Mucosa of descending colon (tissue), 3 donors: ENCODE measurements at regions of chr10 and their contacts with region 1.

Region 1: GRCh38 chr10:23994479-23995046 is 214.4 kb upstream of the KIAA1217 start:
- DNase-seq: peak in 2 of 3 donors; percentile 43 to 87
- ATAC-seq: peak; percentile 77
- H3K4me3 ChIP-seq: no peak overlapping the region
- H3K4me1 ChIP-seq: no peaks in the 10 kb centered on the region
- CTCF ChIP-seq: peak; percentile 49

Region 2: GRCh38 chr10:23469596-23470237 is 524.8 kb before region 1 on chr10:
- intact Hi-C with region 1: no loop called
- DNase-seq: peak in 1 of 3 donors; percentile 13
- ATAC-seq: peak; percentile 64
- H3K4me3 ChIP-seq: no peak overlapping the region
- H3K4me1 ChIP-seq: no peaks in the 10 kb centered on the region
- CTCF ChIP-seq: no peak

Region 3: GRCh38 chr10:23630880-23631279 is 363.7 kb before region 1 on chr10:
- intact Hi-C with region 1: no loop called
- DNase-seq: no peak
- ATAC-seq: no peak
- H3K4me3 ChIP-seq: no peak overlapping the region
- H3K4me1 ChIP-seq: no peaks in the 10 kb centered on the region
- CTCF ChIP-seq: no peak

Region 4: GRCh38 chr10:24197263-24197662 is 202.7 kb after region 1 on chr10:
- intact Hi-C with region 1: loop called in 1 of 2 experiments (anchors 5 kb)
- DNase-seq: no peak
- ATAC-seq: no peak
- H3K4me3 ChIP-seq: no peak overlapping the region
- H3K4me1 ChIP-seq: peaks cover 4% of the 10 kb centered on the region
- CTCF ChIP-seq: no peak

Region 5: DNA sequence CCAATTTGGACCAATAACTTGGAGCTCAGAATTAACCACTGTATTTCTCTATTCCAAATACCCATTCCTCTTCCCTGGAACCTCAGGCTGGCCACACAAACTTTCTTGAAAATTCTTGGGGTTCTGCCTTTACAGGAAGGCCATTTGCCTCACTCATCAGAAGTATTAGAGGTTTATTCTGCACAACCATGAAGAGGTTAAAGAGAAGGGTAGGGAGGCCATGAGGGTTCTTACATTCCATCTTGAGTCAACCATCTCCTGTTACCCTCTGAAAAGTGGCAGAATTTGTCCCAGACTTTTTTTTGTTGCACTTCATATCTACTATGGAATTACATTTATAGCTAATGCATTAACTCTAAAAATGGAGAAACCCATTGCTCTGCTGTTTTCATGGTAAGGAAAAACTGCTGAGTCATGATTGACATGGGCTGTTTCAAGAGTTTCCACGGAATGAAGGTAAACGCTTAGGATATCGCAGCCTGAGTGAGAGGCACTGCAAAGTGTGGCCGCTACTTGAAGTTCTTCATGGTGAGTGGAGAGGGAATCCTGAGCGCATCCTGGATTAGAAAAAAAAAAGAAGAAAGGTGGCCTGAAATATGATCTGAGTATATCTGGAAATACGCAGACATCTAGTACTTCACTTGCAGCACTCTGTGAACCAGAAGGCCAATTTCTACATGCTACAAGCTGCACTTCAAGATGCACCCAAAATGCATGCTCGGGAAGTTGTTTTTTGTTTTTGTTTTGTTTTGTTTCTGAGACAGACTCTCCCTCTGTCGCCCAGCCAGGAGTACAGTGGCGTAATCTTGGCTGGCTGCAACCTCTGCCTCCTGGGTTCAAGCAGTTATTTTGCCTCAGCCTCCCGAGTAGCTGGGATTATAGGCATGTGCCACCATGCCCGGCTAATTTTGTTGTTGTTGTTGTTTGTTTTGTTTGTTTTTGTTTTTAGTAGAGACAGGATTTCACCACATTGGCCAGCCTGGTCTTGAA is 298.0 kb after region 1 on chr10:
- intact Hi-C with region 1: no loop called
- DNase-seq: no peak
- ATAC-seq: no peak
- H3K4me3 ChIP-seq: no peak overlapping the region
- H3K4me1 ChIP-seq: no peaks in the 10 kb centered on the region
- CTCF ChIP-seq: no peak

Region 6: GRCh38 chr10:24349379-24350001 is 354.9 kb after region 1 on chr10:
- intact Hi-C with region 1: no loop called
- DNase-seq: no peak
- ATAC-seq: no peak
- H3K4me3 ChIP-seq: no peak overlapping the region
- H3K4me1 ChIP-seq: no peaks in the 10 kb centered on the region
- CTCF ChIP-seq: no peak

Region 7: GRCh38 chr10:24360282-24361127 is 365.9 kb after region 1 on chr10:
- intact Hi-C with region 1: loop called in 1 of 2 experiments (anchors 10 kb)
- DNase-seq: peak in 2 of 3 donors; percentile 65 to 91
- ATAC-seq: peak; percentile 81
- H3K4me3 ChIP-seq: no peak overlapping the region
- H3K4me1 ChIP-seq: no peaks in the 10 kb centered on the region
- CTCF ChIP-seq: no peak

Region 8: DNA sequence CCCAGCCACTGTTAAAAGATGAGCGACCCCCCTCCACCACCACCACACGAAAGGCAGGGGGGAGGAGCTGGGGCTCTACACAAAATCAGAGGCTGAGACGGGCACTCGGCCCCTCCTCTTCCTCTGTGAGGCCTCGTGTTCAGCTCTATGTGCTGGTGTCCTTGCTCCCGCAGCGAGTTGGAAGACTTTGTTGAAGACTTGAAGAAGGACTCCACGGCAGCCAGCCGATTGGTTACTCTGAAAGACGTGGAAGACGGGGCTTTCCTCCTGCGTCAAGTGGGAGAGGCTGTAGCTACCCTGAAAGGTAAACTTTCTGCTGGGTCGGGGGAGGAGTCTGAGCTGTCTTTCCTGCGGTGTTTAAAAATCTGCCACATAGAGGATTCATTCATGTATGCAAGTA is 525.4 kb after region 1 on chr10:
- intact Hi-C with region 1: loop called in 1 of 2 experiments (anchors 10 kb)
- DNase-seq: no peak
- ATAC-seq: no peak
- H3K4me3 ChIP-seq: no peak overlapping the region
- H3K4me1 ChIP-seq: no peaks in the 10 kb centered on the region
- CTCF ChIP-seq: no peak